ENCODE measurements at regions of chr5 and their contacts with region 1.

Region 1: DNA sequence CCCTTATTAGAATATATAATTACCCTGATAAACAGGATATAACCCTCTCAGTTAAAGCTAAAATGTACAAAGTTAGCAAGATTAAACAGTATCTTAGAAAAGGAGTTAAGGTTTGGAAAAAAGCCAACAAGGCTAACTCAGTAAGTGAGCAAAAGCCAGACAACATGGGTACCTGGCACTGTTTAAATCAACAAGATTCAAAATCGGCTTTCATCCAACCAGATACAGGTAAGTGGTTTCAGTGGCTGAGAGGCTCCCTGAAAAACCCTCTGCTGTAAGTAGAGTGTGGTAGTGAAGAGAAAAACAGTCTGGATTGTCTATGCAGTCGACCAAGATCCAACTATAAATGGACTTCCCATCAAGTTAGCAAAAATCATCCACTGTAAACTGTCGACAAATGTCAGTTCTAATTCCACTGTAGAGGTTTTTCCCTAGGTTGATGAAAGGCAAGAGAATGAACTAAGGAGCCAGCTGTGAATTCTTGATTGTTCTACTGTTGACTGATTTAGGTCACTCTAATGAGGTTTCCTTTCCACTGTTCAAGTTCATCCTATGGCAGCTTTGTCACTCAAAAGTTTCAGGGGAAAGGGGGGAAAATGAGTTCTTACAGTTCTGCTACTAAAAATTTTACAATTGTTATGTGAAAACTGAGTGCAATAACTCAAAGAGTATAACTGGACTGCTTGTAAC is 27.3 kb downstream of the ETF1 start:
- DNase-seq: no peak
- H3K4me3 ChIP-seq: no peak overlapping the region
- H3K27ac ChIP-seq: no peak overlapping the region
- H3K4me1 ChIP-seq: no peaks in the 10 kb centered on the region
- H3K27me3 ChIP-seq: no peaks in the 10 kb centered on the region
- CTCF ChIP-seq: no peak
- EP300 ChIP-seq: no peak
- POLR2A ChIP-seq: no peak
- RAD21 ChIP-seq: no peak

Region 2: DNA sequence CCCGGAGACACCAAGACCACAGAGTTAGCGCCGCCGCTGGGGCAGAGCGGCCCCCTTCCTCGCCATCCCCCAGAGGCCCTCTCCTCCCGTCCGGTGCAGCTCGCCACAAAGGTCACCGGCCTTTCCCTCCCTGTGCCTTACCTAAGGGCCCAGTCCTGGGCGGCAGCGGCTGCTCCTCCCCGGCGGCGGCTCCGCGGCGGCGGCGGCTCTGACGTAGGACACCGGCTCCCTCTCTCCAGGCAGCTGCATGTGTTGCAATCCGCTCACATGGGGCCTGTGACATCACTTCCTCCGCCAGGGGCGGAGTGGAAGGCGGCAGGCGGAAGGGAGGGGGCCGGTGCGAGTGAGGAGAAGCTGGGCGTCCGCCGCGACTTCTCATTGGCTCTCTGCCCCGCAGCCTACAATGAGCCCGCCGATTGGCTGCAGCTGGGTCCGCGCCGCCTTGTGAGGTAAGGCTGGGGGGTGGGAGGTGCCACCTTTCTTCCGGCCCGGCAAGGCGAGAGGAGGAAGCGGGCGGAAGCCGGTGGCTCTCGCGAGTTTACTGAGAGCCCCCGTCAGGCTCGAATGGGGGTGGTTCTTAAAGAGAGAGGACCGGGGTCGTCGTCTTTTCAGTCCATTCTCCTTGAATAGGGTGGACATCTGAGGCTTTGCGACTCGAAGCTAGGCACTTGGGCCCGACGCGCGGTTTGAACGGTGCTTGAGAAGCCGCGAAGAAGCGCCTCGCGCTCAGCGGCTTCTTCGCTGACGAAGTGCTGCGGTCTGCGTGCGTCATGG is 27.4 kb after region 1 on chr5 and contains the start of gene ETF1:
- CTCF ChIA-PET with region 1: interaction called, 5 read pairs
- POLR2A ChIA-PET with region 1: interaction called, 13 read pairs
- DNase-seq: peak; percentile 98
- H3K4me3 ChIP-seq: peak within 1 kb of the TSS; percentile 89 to 100 (median 95)
- H3K27ac ChIP-seq: peak within 1 kb of the TSS; percentile 100
- H3K4me1 ChIP-seq: peaks cover 0 to 16% (median 2%) of the 10 kb centered on the region in 4 experiments; a peak in 4 of 7 replicates
- H3K27me3 ChIP-seq: no peaks in the 10 kb centered on the region
- CTCF ChIP-seq: no peak
- EP300 ChIP-seq: peak in 1 of 2 experiments; percentile 72; a peak in 2 of 3 replicates
- POLR2A ChIP-seq: peak; percentile 77 to 82
- RAD21 ChIP-seq: no peak
- total RNA-seq, gene ETF1: 168 TPM in 2 replicates

Region 3: DNA sequence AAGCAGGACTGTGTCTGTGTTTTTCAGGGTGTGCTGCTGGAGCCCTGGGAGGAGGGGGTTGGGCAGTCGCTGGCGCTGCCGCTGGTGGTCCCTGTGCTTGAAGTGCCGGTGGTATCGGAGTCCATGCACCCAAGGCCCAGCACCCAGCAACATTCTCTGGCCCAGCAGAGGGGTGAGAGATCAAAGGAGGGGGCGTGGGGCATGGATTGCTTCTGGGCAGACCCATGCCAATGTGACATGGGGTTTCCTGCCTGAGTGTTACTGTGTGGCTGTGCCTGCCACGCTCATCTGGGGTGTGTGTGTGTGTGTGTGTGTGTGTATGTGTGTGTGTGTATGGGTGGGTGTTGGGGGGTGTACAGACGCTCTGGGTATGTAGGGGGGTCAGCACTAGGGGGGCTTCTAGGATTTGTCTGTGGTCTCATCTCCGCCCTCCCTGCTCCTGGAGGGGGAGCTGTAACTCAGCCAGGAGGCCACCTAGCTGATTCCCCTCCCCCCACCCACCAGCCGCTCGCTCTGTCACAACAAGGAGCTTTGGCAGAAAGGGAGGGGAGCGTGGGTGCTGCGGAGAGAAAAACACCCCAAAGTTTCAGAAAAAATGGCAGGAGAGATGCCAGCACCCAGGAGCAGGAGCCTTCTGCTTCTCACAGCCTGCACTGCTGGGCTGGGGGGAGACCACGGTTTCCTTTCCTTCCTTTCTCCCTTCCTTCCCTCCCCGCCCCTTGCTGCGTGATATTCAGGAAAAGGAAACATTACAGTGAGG is 95.4 kb after region 1 on chr5:
- CTCF ChIA-PET with region 1: no interaction called
- POLR2A ChIA-PET with region 1: no interaction called
- DNase-seq: peak in 1 of 2 experiments; percentile 72
- H3K4me3 ChIP-seq: peak overlapping the region; percentile 33 to 69 (median 64)
- H3K27ac ChIP-seq: peak overlapping the region; percentile 56
- H3K4me1 ChIP-seq: peaks cover 3 to 21% (median 16%) of the 10 kb centered on the region in 4 experiments
- H3K27me3 ChIP-seq: no peaks in the 10 kb centered on the region
- CTCF ChIP-seq: peak; percentile 36 to 52 (median 41)
- EP300 ChIP-seq: peak in 1 of 2 experiments; percentile 27; a peak in 1 of 3 replicates
- POLR2A ChIP-seq: no peak
- RAD21 ChIP-seq: peak; percentile 35 to 53; a peak in 3 of 4 replicates

Measured in H1 (cell line).